Ascending aorta (tissue), 2 donors: ENCODE measurements at regions of chr1 and their contacts with region 1.

Region 1: GRCh38 chr1:156123356-156124196 is 9.1 kb downstream of the LMNA start:
- DNase-seq: peak; percentile 96 to 99
- H3K4me3 ChIP-seq: peak overlapping the region; percentile 93 to 100
- H3K27ac ChIP-seq: peak overlapping the region; percentile 97
- H3K4me1 ChIP-seq: peaks cover 53 to 88% of the 10 kb centered on the region in 2 donors
- H3K27me3 ChIP-seq: no peaks in the 10 kb centered on the region
- CTCF ChIP-seq: peak in 1 of 3 experiments; percentile 13

Region 2: DNA sequence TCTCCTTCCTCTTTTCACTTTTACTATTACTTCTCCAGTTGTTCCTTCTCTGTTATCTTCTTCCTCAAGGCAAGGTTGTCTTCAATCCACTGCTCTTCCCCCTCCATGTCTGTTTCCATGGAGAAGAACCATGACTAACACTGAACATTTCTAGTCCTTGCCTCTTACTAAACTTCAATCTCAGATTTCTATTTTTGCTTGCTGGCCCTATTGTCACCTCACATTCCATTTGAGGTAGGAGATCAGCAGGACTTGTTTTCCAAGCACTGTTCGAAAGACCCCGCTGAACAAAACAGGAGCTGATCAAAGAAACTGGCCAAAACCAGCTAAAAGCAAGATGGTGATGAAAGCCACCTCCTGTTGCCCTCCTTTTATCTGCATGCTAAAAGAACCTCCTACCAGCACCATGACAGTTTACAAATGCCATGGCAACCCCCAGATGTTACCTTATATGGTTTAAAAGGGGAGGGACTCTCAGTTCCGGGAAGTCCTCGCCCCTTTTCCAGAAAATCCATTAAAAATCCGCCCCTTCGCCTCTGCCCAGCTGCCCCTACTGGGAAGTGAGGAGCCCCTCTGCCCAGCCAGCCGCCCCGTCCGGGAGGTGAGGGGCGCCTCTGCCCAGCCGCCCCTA is 289.2 kb before region 1 on chr1:
- intact Hi-C with region 1: no loop called
- DNase-seq: no peak
- H3K4me3 ChIP-seq: no peak overlapping the region
- H3K27ac ChIP-seq: peak overlapping the region in 1 of 2 donors; percentile 32
- H3K4me1 ChIP-seq: no peaks in the 10 kb centered on the region
- H3K27me3 ChIP-seq: no peaks in the 10 kb centered on the region
- CTCF ChIP-seq: no peak

Region 3: GRCh38 chr1:156104065-156104810 is 19.3 kb before region 1 on chr1:
- intact Hi-C with region 1: loop called (anchors 1 kb)
- DNase-seq: peak in 1 of 2 donors; percentile 93
- H3K4me3 ChIP-seq: peak overlapping the region in 1 of 2 donors; percentile 57
- H3K27ac ChIP-seq: peak overlapping the region; percentile 95 to 96
- H3K4me1 ChIP-seq: peaks cover 39 to 59% of the 10 kb centered on the region in 2 donors
- H3K27me3 ChIP-seq: no peaks in the 10 kb centered on the region
- CTCF ChIP-seq: no peak